Posterior vena cava (tissue), 2 donors: ENCODE measurements at regions of chr7 and their contacts with region 1.

Region 1: DNA sequence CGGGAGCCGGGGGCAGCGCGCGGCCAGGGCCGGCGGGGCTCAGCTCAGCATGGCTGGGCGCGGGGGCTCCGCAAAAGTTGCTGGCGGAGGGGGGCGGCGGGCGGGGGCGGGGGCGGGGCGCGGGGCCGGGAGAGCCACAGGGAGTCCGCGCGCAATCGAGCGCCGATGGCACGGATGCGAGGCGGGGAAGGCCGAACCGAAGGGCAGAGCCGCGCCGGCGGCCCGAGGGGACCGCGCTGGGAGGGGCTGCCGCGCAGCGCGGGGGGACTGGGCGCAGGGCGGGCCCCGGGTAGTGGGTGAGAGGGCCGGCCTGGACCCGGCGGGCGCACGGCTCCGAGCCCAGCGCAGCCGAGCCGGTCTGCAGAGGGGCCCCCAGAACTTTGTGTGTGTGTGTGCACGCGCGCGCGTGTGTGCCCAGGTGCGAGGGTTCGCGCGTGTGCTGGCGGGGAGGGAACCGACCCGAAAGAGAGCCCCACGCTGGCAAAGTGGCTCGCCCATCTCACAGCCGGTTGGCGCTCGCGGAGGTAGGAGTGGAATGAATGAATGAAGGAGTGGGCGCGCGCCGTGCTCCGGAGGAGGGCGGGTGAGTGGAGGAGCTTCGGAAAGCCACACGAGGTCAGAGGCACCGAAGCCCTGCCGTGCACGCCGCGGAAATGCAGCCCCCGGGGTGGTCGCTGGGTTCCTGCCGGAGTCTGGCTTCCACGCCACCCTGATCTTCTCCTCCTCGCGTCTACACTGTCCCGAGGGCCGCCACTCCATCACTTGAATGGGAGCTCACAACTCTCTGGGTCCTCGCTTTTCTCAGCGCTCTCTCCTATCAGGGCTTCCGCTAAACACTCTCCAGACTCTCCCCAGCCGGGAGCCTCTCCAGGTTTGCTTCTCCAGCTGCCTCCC is at the start of gene HIPK2:
- DNase-seq: peak; percentile 92
- total RNA-seq, gene HIPK2: 46.5 to 67.6 TPM

Region 2: DNA sequence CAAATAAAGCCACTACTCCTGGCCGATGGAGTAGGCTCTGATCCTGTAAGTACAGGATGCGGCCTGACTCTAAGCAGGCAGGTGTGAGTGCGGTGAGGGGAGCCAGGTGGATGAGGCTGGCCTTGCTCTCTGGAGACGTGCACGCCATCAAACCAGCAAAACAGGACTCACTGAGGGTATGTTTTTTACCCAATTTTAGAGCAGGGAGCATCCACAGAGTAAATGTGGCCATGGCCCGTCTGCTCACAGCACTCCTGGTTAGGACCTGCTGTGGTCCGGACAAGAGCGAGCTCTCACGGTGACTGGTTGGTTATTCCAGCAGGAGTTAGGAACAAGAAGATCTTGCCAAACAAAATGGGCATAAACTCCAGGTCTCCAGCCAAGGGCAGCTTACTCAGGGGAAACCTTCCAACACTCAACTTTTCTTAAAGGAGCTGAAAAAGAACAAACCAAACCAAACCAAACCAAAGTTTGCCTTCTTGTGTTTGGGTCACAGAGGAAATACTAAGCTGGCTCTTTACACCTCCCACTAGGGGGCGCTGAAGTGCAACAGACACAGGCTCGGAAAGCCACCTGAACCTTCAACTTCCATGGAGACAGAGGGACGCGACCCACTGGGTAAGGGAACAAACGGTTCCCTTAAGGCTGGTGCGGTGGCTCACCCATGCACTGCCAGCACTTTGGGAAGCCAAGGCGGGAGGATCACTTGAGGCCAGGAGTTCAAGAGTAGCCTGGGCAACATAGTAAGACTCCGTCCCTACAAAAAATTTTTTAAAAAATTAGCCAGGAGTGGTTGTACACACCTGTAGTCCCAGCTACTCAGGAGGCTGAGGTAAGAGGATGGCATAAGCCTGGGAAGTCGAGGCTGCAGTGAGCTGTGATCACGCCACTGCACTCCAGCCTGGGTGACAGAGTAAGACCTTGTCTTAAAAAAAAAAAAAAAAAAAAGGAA is 132.3 kb before region 1 on chr7:
- intact Hi-C with region 1: loop called in 1 of 2 experiments (anchors 5 kb)
- DNase-seq: peak; percentile 92

Region 3: DNA sequence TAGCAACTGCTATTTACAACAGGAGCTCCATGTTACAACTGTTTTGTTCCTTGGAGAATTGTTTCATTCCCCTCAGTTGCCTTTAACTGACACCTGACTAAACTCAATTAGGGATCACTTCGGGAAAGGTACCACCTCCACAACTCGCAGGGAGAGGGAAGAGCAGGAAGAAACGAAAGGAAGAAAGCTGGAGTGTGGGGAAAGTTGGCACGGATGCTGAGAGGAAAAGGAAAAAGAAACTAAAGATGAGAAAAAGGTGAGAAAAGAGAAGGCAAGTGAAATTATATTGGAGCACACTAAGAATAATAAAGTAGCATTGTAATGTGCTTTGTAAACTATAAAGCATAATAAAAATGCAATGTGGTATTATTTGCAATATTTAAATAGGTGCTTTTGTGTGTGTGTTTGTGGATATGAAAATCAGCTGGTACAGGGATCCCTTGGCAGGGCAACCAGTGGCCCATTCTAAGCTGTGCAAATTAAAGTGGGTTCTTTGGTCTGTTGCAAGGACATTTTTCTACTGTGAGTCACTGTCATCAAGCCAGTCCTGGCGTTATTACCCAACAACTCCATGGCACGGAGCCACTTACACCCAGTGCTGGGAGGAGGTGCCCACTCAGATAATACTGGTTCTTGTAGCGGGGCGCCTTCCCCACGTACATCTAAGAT is 46.3 kb before region 1 on chr7:
- intact Hi-C with region 1: loop called in 1 of 2 experiments (anchors 5 kb)
- DNase-seq: peak; percentile 95

Region 4: GRCh38 chr7:139820089-139820488 is 41.9 kb after region 1 on chr7:
- intact Hi-C with region 1: no loop called
- DNase-seq: no peak

Region 5: GRCh38 chr7:140003913-140004382 is 225.8 kb after region 1 on chr7:
- intact Hi-C with region 1: loop called in 1 of 2 experiments (anchors 5 kb)
- DNase-seq: peak; percentile 43

Region 6: DNA sequence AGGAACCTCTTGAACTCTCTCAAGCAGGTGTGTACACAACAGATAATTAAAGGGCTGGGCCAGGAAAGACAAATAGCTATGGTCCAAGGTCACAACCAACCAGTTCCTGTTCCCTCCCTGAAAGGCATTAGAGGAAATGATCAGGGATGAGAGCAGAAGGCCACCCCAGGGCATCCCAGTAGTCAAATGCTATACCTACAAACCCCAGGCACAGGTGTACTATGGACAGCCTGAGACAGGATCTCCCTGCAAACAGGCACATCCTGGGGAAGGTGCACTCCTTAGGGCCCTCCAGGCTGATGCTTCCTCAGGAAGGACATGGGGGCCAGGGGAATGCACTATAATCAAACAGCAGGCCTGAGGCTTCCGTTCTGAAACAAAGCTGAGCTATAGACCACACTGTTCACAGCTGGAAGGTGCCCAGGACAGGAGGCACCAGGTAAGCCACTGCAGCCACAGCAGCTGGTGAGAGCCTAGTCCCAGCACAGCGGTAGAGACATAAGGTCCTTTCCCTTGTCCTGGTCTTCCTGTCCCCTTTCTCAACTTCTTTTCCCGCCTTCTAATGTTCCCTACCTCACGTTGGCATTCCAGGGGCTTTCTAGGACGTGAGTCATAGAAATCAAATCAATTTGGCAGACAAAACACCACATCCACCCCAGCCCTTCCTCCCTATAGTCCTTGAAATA is 271.3 kb after region 1 on chr7:
- intact Hi-C with region 1: no loop called
- DNase-seq: no peak